ENCODE measurements at regions of chr5 and their contacts with region 1.

Region 1: GRCh38 chr5:36241631-36242533 is at the start of gene NADK2:
- DNase-seq: peak; percentile 95 to 98
- H3K4me3 ChIP-seq: peak within 1 kb of the TSS; percentile 69 to 99
- H3K27ac ChIP-seq: peak within 1 kb of the TSS; percentile 92 to 100
- H3K4me1 ChIP-seq: peaks cover 0 to 42% (median 25%) of the 10 kb centered on the region in 4 donors
- H3K27me3 ChIP-seq: no peaks in the 10 kb centered on the region
- CTCF ChIP-seq: peak; percentile 51 to 73

Region 2: GRCh38 chr5:36151434-36152323 is 90.2 kb before region 1 on chr5 and contains the starts of genes LMBRD2 and SKP2:
- intact Hi-C with region 1: loop called (anchors 10 kb)
- DNase-seq: peak; percentile 99
- H3K4me3 ChIP-seq: peak within 1 kb of the TSS; percentile 94 to 98
- H3K27ac ChIP-seq: peak within 1 kb of the TSS; percentile 83 to 90
- H3K4me1 ChIP-seq: peaks cover 0 to 58% (median 27%) of the 10 kb centered on the region in 4 donors
- H3K27me3 ChIP-seq: no peaks in the 10 kb centered on the region
- CTCF ChIP-seq: no peak

Region 3: DNA sequence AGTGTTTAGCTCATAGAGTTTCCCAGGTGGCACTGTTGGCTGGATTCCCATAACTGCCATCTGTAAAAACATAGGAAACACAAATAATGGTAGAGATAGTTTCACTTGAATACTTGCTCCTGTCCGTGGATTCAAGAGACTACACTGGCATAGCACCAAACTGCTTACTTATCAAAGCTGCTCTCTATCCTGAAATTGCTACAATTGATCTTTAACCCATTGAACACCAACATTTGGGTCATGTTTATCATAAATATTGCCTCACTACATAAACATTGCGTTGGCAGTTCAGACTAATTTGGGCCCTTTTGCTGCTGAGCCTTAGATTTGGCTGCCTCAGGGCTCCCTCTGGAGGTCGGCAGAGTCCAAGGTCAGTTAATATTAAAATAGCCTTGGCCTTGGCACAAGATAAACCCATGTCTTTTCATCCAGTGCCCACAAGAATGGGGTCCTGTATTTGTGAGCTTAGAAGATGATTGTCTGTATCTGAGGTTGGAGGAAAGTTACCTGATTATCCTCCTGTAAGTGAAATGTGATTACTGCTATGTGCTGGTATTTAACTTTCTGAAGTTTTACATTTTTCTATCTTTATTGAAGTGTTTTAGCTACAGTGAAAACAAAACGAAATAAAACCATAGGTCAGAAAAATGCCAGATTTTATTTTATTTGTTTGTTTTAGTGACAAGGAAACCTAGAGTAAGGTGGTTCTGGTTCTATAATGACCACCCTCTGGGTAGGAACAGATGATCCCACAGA is 63.9 kb after region 1 on chr5:
- intact Hi-C with region 1: loop called (anchors 10 kb)
- DNase-seq: peak; percentile 36 to 72
- H3K4me3 ChIP-seq: no peak overlapping the region
- H3K27ac ChIP-seq: peak overlapping the region in 1 of 2 donors; percentile 77
- H3K4me1 ChIP-seq: peaks cover 0 to 42% (median 9%) of the 10 kb centered on the region in 4 donors
- H3K27me3 ChIP-seq: no peaks in the 10 kb centered on the region
- CTCF ChIP-seq: peak; percentile 72 to 81

Region 4: DNA sequence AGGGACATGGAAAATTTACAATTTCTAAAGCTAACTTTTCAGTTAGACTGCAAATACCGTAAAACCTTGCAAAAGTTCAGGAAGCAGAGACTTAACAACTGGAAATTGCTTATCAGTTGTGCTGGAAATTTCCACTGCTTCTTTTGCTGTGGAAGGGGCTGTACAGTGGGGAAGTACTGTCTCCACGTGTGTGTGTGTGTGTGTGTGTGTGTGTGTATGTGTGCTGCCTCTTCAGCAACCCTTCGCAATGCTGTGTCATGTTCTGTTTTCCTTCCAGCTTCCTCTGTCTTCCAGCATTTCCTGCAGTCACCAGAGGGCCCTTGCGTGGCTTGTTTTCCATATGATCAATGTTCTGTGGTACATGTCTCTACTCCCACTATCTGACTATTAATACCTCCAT is 147.4 kb after region 1 on chr5:
- intact Hi-C with region 1: no loop called
- DNase-seq: peak in 1 of 2 donors; percentile 56
- H3K4me3 ChIP-seq: no peak overlapping the region
- H3K27ac ChIP-seq: no peak overlapping the region
- H3K4me1 ChIP-seq: peaks cover 0 to 24% (median 17%) of the 10 kb centered on the region in 4 donors
- H3K27me3 ChIP-seq: no peaks in the 10 kb centered on the region
- CTCF ChIP-seq: no peak

Measured in tibial artery (tissue), 4 donors.